Activated CD8-positive, alpha-beta T cell treated with anti-CD3 and anti-CD28 coated beads for 36 hours (primary cell): ENCODE measurements at regions of chr12 and their contacts with region 1.

Region 1: GRCh38 chr12:104462931-104463339 is 6.2 kb downstream of the CHST11 start:
- DNase-seq: peak; percentile 71
- ATAC-seq: peak; percentile 65
- H3K4me3 Mint-ChIP-seq: peak overlapping the region; percentile 59
- H3K27ac Mint-ChIP-seq: peak overlapping the region; percentile 84
- H3K4me1 Mint-ChIP-seq: peaks cover 80% of the 10 kb centered on the region
- H3K27me3 Mint-ChIP-seq: no peaks in the 10 kb centered on the region
- CTCF ChIP-seq: no peak

Region 2: GRCh38 chr12:104478396-104479122 is 15.6 kb after region 1 on chr12:
- CTCF ChIA-PET with region 1: interaction called, 28 read pairs
- POLR2A ChIA-PET with region 1: interaction called, 30 read pairs
- intact Hi-C with region 1: loop called (anchors 2 kb)
- DNase-seq: no peak
- ATAC-seq: peak; percentile 70
- H3K4me3 Mint-ChIP-seq: peak overlapping the region; percentile 70
- H3K27ac Mint-ChIP-seq: peak overlapping the region; percentile 95
- H3K4me1 Mint-ChIP-seq: peaks cover 84% of the 10 kb centered on the region
- H3K27me3 Mint-ChIP-seq: no peaks in the 10 kb centered on the region
- CTCF ChIP-seq: no peak

Region 3: DNA sequence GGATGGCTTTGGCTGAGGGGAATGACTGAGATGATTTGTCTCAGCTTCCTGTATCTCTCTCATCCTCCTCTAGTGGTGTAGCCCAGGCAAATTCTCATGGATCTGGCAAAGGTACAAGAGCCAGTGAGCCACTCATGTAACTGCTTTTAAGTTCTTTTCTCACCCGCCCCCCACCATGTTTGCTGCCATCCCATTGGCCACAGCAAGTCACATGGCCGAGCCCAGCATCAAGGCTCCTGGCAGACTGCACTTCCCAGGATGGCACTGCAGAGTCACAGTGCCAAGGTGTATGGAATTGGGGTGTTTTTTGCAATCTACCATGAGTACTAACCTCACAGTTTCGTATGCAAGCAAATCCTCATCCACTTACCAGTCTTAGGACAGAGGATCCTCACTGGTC is 44.7 kb after region 1 on chr12:
- CTCF ChIA-PET with region 1: no interaction called
- POLR2A ChIA-PET with region 1: no interaction called
- intact Hi-C with region 1: no loop called
- DNase-seq: no peak
- ATAC-seq: no peak
- H3K4me3 Mint-ChIP-seq: no peak overlapping the region
- H3K27ac Mint-ChIP-seq: no peak overlapping the region
- H3K4me1 Mint-ChIP-seq: peaks cover 63% of the 10 kb centered on the region
- H3K27me3 Mint-ChIP-seq: no peaks in the 10 kb centered on the region
- CTCF ChIP-seq: no peak